ENCODE measurements at regions of chr22 and their contacts with region 1.

Region 1: GRCh38 chr22:36757668-36758211 is 18.2 kb downstream of the IFT27 start:
- DNase-seq: peak; percentile 38
- H3K4me3 ChIP-seq: no peak overlapping the region
- H3K27ac ChIP-seq: no peak overlapping the region
- H3K27me3 ChIP-seq: peaks cover 9% of the 10 kb centered on the region
- CTCF ChIP-seq: peak; percentile 83

Region 2: GRCh38 chr22:36546092-36546804 is 211.5 kb before region 1 on chr22:
- CTCF ChIA-PET with region 1: interaction called, 10 read pairs
- POLR2A ChIA-PET with region 1: no interaction called
- DNase-seq: no peak
- H3K4me3 ChIP-seq: no peak overlapping the region
- H3K27ac ChIP-seq: no peak overlapping the region
- H3K27me3 ChIP-seq: peaks cover 10% of the 10 kb centered on the region
- CTCF ChIP-seq: peak; percentile 58

Region 3: GRCh38 chr22:36977947-36978660 is 220.4 kb after region 1 on chr22:
- CTCF ChIA-PET with region 1: interaction called, 14 read pairs
- POLR2A ChIA-PET with region 1: no interaction called
- DNase-seq: peak; percentile 49
- H3K4me3 ChIP-seq: peak overlapping the region; percentile 39
- H3K27ac ChIP-seq: no peak overlapping the region
- H3K27me3 ChIP-seq: peaks cover 12% of the 10 kb centered on the region
- CTCF ChIP-seq: peak; percentile 90